Naive thymus-derived CD4-positive, alpha-beta T cell (primary cell): ENCODE measurements at regions of chr12 and their contacts with region 1.

Region 1: GRCh38 chr12:32548691-32549281 is 130.3 kb upstream of the DNM1L start:
- DNase-seq: no peak
- ATAC-seq: no peak
- H3K4me3 ChIP-seq: no peak overlapping the region
- H3K4me3 Mint-ChIP-seq: no peak overlapping the region
- H3K27ac ChIP-seq: no peak overlapping the region
- H3K27ac Mint-ChIP-seq: no peak overlapping the region
- H3K4me1 ChIP-seq: no peaks in the 10 kb centered on the region
- H3K4me1 Mint-ChIP-seq: peaks cover 0 to 2% (median 0%) of the 10 kb centered on the region in 7 donors
- H3K27me3 ChIP-seq: no peaks in the 10 kb centered on the region
- H3K27me3 Mint-ChIP-seq: peaks cover 0 to 5% (median 0%) of the 10 kb centered on the region in 5 donors

Region 2: GRCh38 chr12:30622509-30622908 is 1926.3 kb before region 1 on chr12:
- CTCF ChIA-PET with region 1: no interaction called
- POLR2A ChIA-PET with region 1: no interaction called
- intact Hi-C with region 1: no loop called
- DNase-seq: no peak
- ATAC-seq: no peak
- H3K4me3 ChIP-seq: no peak overlapping the region
- H3K4me3 Mint-ChIP-seq: no peak overlapping the region
- H3K27ac ChIP-seq: no peak overlapping the region
- H3K27ac Mint-ChIP-seq: peak overlapping the region in 1 of 9 donors; percentile 23
- H3K4me1 ChIP-seq: no peaks in the 10 kb centered on the region
- H3K4me1 Mint-ChIP-seq: peaks cover 0 to 3% (median 0%) of the 10 kb centered on the region in 7 donors
- H3K27me3 ChIP-seq: no peaks in the 10 kb centered on the region
- H3K27me3 Mint-ChIP-seq: no peaks in the 10 kb centered on the region

Region 3: DNA sequence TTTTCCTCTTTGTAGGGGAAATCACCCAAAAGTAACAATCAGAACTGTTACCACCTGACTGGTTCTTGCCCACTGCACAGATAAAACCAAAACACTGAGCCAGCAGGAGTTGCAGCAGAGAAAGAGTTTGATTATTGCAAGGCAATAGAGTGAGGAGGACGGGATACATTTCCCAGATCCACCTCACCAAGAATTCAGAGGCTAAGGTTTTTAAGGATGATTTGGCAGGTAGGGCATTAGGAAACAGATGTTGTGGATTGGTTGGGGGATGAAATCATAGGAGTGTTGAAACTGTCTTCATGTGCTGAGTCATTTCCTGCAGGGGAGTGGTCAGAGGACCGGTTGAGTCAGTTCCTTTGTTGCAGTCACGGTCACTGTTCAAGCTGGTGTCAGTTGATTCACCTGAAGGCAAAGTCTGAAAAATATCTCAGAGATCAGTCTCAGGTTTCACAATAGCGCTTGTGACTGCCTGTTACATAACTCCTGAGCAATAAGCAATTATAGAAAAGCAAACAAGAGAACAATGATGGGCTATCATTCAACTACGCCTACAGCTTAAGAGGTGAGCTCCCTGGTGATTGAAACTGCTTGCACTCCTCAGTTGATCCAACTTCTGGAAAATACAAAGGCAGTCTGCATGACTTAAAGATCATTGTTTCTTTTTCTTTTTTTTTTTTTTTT is 799.6 kb before region 1 on chr12:
- CTCF ChIA-PET with region 1: no interaction called
- POLR2A ChIA-PET with region 1: no interaction called
- intact Hi-C with region 1: no loop called
- DNase-seq: peak in 1 of 9 donors; percentile 57
- ATAC-seq: peak; percentile 89
- H3K4me3 ChIP-seq: peak overlapping the region; percentile 34
- H3K4me3 Mint-ChIP-seq: peak overlapping the region in 7 of 10 donors; percentile 21 to 66 (median 38)
- H3K27ac ChIP-seq: no peak overlapping the region
- H3K27ac Mint-ChIP-seq: peak overlapping the region in 8 of 9 donors; percentile 14 to 83 (median 63)
- H3K4me1 ChIP-seq: peaks cover 18 to 20% of the 10 kb centered on the region in 2 donors
- H3K4me1 Mint-ChIP-seq: peaks cover 31 to 76% (median 65%) of the 10 kb centered on the region in 7 donors
- H3K27me3 ChIP-seq: no peaks in the 10 kb centered on the region
- H3K27me3 Mint-ChIP-seq: no peaks in the 10 kb centered on the region

Region 4: DNA sequence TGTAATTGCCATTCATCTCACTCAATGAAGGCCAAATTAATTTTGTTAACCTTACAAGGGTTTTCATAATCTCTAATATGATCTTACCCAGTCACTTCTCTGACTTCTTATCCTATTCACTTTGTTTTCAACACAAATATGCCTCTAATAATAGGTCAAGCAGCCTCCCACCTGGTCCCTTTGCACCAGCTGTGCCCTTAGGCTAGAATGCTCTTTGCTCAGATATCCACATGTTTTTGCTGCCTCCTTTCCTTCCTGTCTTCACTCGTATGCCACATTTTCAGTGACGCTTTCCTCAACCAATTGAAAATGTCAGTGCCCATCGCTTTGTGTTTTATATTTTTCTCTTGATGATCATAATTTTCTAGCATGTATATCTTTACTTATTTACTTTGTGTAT is 997.2 kb after region 1 on chr12:
- CTCF ChIA-PET with region 1: no interaction called
- POLR2A ChIA-PET with region 1: no interaction called
- intact Hi-C with region 1: loop called in 1 of 2 experiments (anchors 5 kb)
- DNase-seq: no peak
- ATAC-seq: no peak
- H3K4me3 ChIP-seq: no peak overlapping the region
- H3K4me3 Mint-ChIP-seq: no peak overlapping the region
- H3K27ac ChIP-seq: no peak overlapping the region
- H3K27ac Mint-ChIP-seq: no peak overlapping the region
- H3K4me1 ChIP-seq: no peaks in the 10 kb centered on the region
- H3K4me1 Mint-ChIP-seq: no peaks in the 10 kb centered on the region
- H3K27me3 ChIP-seq: no peaks in the 10 kb centered on the region
- H3K27me3 Mint-ChIP-seq: no peaks in the 10 kb centered on the region